Aorta (tissue), 5 donors: ENCODE measurements at regions of chr18 and their contacts with region 1.

Region 1: GRCh38 chr18:10804126-10804525 is 278.3 kb downstream of the NAPG start:
- DNase-seq: no peak
- ATAC-seq: no peak
- H3K4me3 ChIP-seq: no peak overlapping the region
- H3K27ac ChIP-seq: no peak overlapping the region
- H3K4me1 ChIP-seq: no peaks in the 10 kb centered on the region
- H3K27me3 ChIP-seq: no peaks in the 10 kb centered on the region

Region 2: DNA sequence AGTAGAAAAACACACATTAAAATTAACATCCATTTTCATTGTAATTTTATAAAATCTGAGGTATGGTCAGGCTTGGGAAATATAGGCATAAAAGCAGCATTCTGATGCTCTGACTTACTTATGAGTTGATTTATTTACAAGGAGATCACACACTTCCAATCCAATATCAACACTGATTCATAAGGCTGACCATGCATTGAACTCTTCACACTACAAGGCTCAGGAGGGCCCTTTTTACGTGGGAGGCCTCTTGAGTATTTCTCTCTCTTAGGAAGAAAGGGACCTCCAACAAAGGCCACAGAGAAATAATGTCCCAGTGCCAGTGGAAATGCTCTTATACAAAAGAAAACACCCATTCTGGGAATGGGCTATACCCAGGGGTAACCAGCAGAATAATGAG is 55.5 kb before region 1 on chr18:
- intact Hi-C with region 1: loop called in 1 of 2 experiments (anchors 10 kb)
- DNase-seq: no peak
- ATAC-seq: no peak
- H3K4me3 ChIP-seq: no peak overlapping the region
- H3K27ac ChIP-seq: no peak overlapping the region
- H3K4me1 ChIP-seq: no peaks in the 10 kb centered on the region
- H3K27me3 ChIP-seq: no peaks in the 10 kb centered on the region

Region 3: DNA sequence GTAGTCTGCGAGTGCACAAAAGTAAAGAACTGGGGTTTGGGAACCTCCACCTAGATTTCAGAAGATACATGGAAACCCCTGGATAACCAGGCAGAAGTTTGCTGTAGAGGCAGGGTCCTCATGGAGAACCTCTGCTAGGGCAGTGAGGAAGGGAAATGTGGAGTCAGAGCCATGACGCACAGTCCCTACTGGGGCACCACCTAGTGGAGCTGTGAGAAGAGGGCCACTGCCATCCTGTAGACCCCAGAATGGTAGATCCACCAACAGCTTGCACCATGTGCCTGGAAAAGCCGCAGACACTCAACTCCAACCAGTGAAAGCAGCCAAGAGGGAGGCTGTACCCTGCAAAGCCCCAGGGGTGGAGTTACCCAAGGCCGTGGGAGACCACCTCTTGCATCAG is 138.9 kb after region 1 on chr18:
- intact Hi-C with region 1: no loop called
- DNase-seq: no peak
- ATAC-seq: no peak
- H3K4me3 ChIP-seq: no peak overlapping the region
- H3K27ac ChIP-seq: no peak overlapping the region
- H3K4me1 ChIP-seq: peaks cover 0 to 2% of the 10 kb centered on the region in 2 donors
- H3K27me3 ChIP-seq: no peaks in the 10 kb centered on the region